ENCODE measurements at regions of chr1 and their contacts with region 1.

Region 1: GRCh38 chr1:46303038-46303871 is at the starts of genes LRRC41 and UQCRH:
- DNase-seq: peak; percentile 97
- ATAC-seq: peak; percentile 85
- H3K4me3 ChIP-seq: peak within 1 kb of the TSS; percentile 67 to 98 (median 82)
- H3K4me3 Mint-ChIP-seq: peak within 1 kb of the TSS; percentile 100
- H3K27ac ChIP-seq: peak within 1 kb of the TSS; percentile 77 to 92
- H3K27ac Mint-ChIP-seq: peak within 1 kb of the TSS; percentile 99
- H3K4me1 ChIP-seq: peaks cover 24 to 43% of the 10 kb centered on the region in 2 donors
- H3K4me1 Mint-ChIP-seq: peaks cover 52% of the 10 kb centered on the region
- H3K27me3 ChIP-seq: no peaks in the 10 kb centered on the region
- H3K27me3 Mint-ChIP-seq: no peaks in the 10 kb centered on the region
- CTCF ChIP-seq: no peak
- total RNA-seq, gene LRRC41: 39.0 and 40.7 TPM in 2 replicates
- total RNA-seq, gene UQCRH: 144 and 146 TPM in 2 replicates

Region 2: DNA sequence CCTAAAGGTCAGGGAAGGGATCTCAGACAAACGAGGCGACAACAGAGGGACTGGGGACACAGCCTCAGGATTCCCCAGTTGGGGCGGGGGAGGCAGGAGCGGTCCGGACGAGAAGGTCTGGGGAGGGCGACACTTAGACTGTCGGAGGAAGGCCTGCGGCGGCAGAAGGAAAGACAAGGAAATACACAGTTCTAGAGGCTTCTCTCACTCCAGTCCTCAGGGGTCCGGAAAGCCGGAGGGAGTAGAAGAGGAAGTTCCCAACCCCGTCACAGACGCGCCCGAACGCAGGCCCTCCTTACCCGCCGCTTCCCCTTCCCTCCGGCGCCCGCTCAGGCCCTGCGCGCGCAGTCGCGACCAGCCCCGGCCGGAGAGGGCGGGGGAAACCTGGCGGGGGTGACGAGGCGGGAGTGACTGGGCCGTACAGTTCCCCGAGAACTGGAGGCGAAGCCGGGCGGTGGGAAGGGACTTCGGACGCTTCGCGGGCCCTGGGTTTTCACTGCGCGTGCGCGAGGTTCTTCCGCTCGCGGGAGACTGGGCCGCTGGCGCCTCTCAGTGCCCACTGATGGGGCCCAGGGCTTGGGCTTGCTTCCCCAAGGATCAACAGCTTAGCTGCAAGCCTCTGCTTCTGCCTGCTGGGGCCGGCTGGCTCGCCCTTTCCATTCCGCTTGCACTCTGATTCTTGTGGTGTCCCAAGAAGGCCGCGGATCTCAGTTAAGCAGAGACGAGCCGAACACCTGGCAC is 552.8 kb before region 1 on chr1 and contains the start of gene IPP:
- CTCF ChIA-PET with region 1: no interaction called
- POLR2A ChIA-PET with region 1: no interaction called
- intact Hi-C with region 1: loop called (anchors 2 kb)
- DNase-seq: peak; percentile 96
- ATAC-seq: peak; percentile 94
- H3K4me3 ChIP-seq: peak within 1 kb of the TSS; percentile 70 to 82 (median 75)
- H3K4me3 Mint-ChIP-seq: peak within 1 kb of the TSS; percentile 99
- H3K27ac ChIP-seq: peak within 1 kb of the TSS; percentile 94 to 98
- H3K27ac Mint-ChIP-seq: peak within 1 kb of the TSS; percentile 100
- H3K4me1 ChIP-seq: peaks cover 8 to 18% of the 10 kb centered on the region in 2 donors
- H3K4me1 Mint-ChIP-seq: peaks cover 15% of the 10 kb centered on the region
- H3K27me3 ChIP-seq: no peaks in the 10 kb centered on the region
- H3K27me3 Mint-ChIP-seq: no peaks in the 10 kb centered on the region
- CTCF ChIP-seq: no peak
- total RNA-seq, gene IPP: 12.1 and 12.7 TPM in 2 replicates

Region 3: DNA sequence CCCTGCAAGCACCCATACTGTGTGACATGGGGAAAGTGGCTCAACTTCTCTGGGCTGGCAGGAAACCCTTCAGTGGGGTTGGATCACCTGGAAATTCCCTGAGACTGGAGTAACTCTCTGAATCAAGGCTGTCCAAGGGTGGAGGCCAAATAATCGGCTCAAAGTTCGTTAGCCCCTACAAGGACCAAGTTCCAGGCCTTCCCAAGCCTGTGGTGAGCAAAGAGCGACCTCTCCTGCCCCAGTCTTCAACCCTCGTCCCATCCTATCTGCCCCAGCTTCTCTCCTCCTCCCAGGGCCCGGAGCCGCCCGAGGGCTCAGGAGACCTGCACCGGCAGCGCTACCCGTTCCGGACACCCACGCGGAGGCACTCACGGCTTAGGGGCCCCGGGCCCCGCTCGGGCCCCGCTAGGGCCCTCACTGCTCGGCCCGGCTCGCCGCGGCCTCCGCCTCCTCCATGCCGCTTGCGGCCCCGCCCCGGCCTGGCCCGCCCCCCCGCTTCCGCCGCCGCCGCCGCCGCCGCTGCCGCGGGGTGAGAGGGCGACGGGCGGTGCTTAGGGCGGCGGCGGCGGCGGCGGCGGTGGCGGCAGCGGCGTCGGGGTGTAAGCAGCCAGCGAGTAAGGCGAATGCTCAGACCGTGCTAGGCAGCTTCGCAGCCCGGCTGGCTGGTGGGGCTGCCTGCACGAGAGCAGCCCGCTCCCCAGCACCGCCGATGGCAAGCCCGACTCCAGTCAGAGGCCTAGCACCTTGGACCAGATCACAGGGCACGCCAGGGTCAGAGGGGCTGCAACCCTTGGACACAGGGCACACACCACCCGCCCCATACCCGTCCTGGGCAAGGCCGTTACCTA is 105.1 kb before region 1 on chr1 and contains the start of gene POMGNT1:
- CTCF ChIA-PET with region 1: no interaction called
- POLR2A ChIA-PET with region 1: no interaction called
- intact Hi-C with region 1: loop called (anchors 2 kb)
- DNase-seq: peak; percentile 81
- ATAC-seq: peak; percentile 98
- H3K4me3 ChIP-seq: peak within 1 kb of the TSS; percentile 74 to 80 (median 77)
- H3K4me3 Mint-ChIP-seq: peak within 1 kb of the TSS; percentile 88
- H3K27ac ChIP-seq: peak within 1 kb of the TSS; percentile 34 to 66
- H3K27ac Mint-ChIP-seq: peak within 1 kb of the TSS; percentile 70
- H3K4me1 ChIP-seq: peaks cover 19 to 28% of the 10 kb centered on the region in 2 donors
- H3K4me1 Mint-ChIP-seq: peaks cover 26% of the 10 kb centered on the region
- H3K27me3 ChIP-seq: peaks cover 0 to 9% (median 4%) of the 10 kb centered on the region in 4 experiments
- H3K27me3 Mint-ChIP-seq: peaks cover 6% of the 10 kb centered on the region
- CTCF ChIP-seq: no peak
- total RNA-seq, gene POMGNT1: 50.8 and 51.0 TPM in 2 replicates

Region 4: GRCh38 chr1:46333300-46334029 is 30.2 kb after region 1 on chr1:
- CTCF ChIA-PET with region 1: interaction called, 15 read pairs
- POLR2A ChIA-PET with region 1: interaction called, 9 read pairs
- intact Hi-C with region 1: loop called (anchors 2 kb)
- DNase-seq: peak; percentile 55
- ATAC-seq: peak; percentile 59
- H3K4me3 ChIP-seq: no peak overlapping the region
- H3K4me3 Mint-ChIP-seq: no peak overlapping the region
- H3K27ac ChIP-seq: peak overlapping the region; percentile 42 to 78
- H3K27ac Mint-ChIP-seq: peak overlapping the region; percentile 59
- H3K4me1 ChIP-seq: peaks cover 20 to 28% of the 10 kb centered on the region in 2 donors
- H3K4me1 Mint-ChIP-seq: peaks cover 30% of the 10 kb centered on the region
- H3K27me3 ChIP-seq: no peaks in the 10 kb centered on the region
- H3K27me3 Mint-ChIP-seq: no peaks in the 10 kb centered on the region
- CTCF ChIP-seq: peak; percentile 36

Region 5: GRCh38 chr1:46603858-46604549 is 300.7 kb after region 1 on chr1 and contains the start of gene MKNK1:
- CTCF ChIA-PET with region 1: no interaction called
- POLR2A ChIA-PET with region 1: no interaction called
- intact Hi-C with region 1: loop called (anchors 5 kb)
- DNase-seq: peak; percentile 98
- ATAC-seq: peak; percentile 99
- H3K4me3 ChIP-seq: peak within 1 kb of the TSS; percentile 72 to 95 (median 92)
- H3K4me3 Mint-ChIP-seq: peak within 1 kb of the TSS; percentile 96
- H3K27ac ChIP-seq: peak within 1 kb of the TSS; percentile 14 to 62
- H3K27ac Mint-ChIP-seq: peak within 1 kb of the TSS; percentile 95
- H3K4me1 ChIP-seq: peaks cover 12 to 15% of the 10 kb centered on the region in 2 donors
- H3K4me1 Mint-ChIP-seq: peaks cover 27% of the 10 kb centered on the region
- H3K27me3 ChIP-seq: no peaks in the 10 kb centered on the region
- H3K27me3 Mint-ChIP-seq: no peaks in the 10 kb centered on the region
- CTCF ChIP-seq: no peak
- total RNA-seq, gene MKNK1: 69.5 and 73.0 TPM in 2 replicates

Region 6: GRCh38 chr1:47309427-47309826 is 1006.2 kb after region 1 on chr1:
- CTCF ChIA-PET with region 1: no interaction called
- POLR2A ChIA-PET with region 1: no interaction called
- intact Hi-C with region 1: no loop called
- DNase-seq: no peak
- ATAC-seq: no peak
- H3K4me3 ChIP-seq: no peak overlapping the region
- H3K4me3 Mint-ChIP-seq: no peak overlapping the region
- H3K27ac ChIP-seq: no peak overlapping the region
- H3K27ac Mint-ChIP-seq: no peak overlapping the region
- H3K4me1 ChIP-seq: peaks cover 0 to 8% of the 10 kb centered on the region in 2 donors
- H3K4me1 Mint-ChIP-seq: peaks cover 12% of the 10 kb centered on the region
- H3K27me3 ChIP-seq: no peaks in the 10 kb centered on the region
- H3K27me3 Mint-ChIP-seq: no peaks in the 10 kb centered on the region
- CTCF ChIP-seq: no peak

Measured in B cell (primary cell).